Gastrocnemius medialis (tissue), 4 donors: ENCODE measurements at regions of chr16 and their contacts with region 1.

Region 1: GRCh38 chr16:89442990-89443731 is 47.2 kb downstream of the ANKRD11 start:
- DNase-seq: peak in 1 of 2 donors; percentile 69
- ATAC-seq: peak; percentile 7 to 46
- H3K4me3 ChIP-seq: no peak overlapping the region
- H3K27ac ChIP-seq: peak overlapping the region; percentile 81 to 90 (median 81)
- H3K4me1 ChIP-seq: peaks cover 83 to 92% of the 10 kb centered on the region in 2 donors
- H3K27me3 ChIP-seq: no peaks in the 10 kb centered on the region
- CTCF ChIP-seq: no peak
- POLR2A ChIP-seq: no peak

Region 2: GRCh38 chr16:89410794-89411309 is 32.3 kb before region 1 on chr16:
- in situ Hi-C with region 1: no loop called
- intact Hi-C with region 1: no loop called
- DNase-seq: peak; percentile 34 to 53
- ATAC-seq: peak; percentile 28 to 51
- H3K4me3 ChIP-seq: no peak overlapping the region
- H3K27ac ChIP-seq: peak overlapping the region; percentile 9 to 82 (median 49)
- H3K4me1 ChIP-seq: peaks cover 85 to 94% of the 10 kb centered on the region in 2 donors
- H3K27me3 ChIP-seq: no peaks in the 10 kb centered on the region
- CTCF ChIP-seq: no peak
- POLR2A ChIP-seq: no peak

Region 3: GRCh38 chr16:89466920-89467319 is 23.8 kb after region 1 on chr16:
- in situ Hi-C with region 1: no loop called
- intact Hi-C with region 1: loop called (anchors 2 kb)
- DNase-seq: no peak
- ATAC-seq: no peak
- H3K4me3 ChIP-seq: no peak overlapping the region
- H3K27ac ChIP-seq: peak overlapping the region in 1 of 4 donors; percentile 31
- H3K4me1 ChIP-seq: peaks cover 47 to 48% of the 10 kb centered on the region in 2 donors
- H3K27me3 ChIP-seq: no peaks in the 10 kb centered on the region
- CTCF ChIP-seq: no peak
- POLR2A ChIP-seq: no peak

Region 4: GRCh38 chr16:89476804-89477261 is 33.7 kb after region 1 on chr16:
- in situ Hi-C with region 1: no loop called
- intact Hi-C with region 1: loop called (anchors 5 kb)
- DNase-seq: no peak
- ATAC-seq: peak; percentile 73 to 83
- H3K4me3 ChIP-seq: no peak overlapping the region
- H3K27ac ChIP-seq: peak overlapping the region; percentile 62 to 86 (median 74)
- H3K4me1 ChIP-seq: peaks cover 92 to 96% of the 10 kb centered on the region in 2 donors
- H3K27me3 ChIP-seq: no peaks in the 10 kb centered on the region
- CTCF ChIP-seq: no peak
- POLR2A ChIP-seq: peak in 1 of 2 donors; percentile 18

Region 5: GRCh38 chr16:89490387-89491237 is 47.5 kb after region 1 on chr16 and contains the start of gene ANKRD11:
- in situ Hi-C with region 1: no loop called
- intact Hi-C with region 1: no loop called
- DNase-seq: peak; percentile 100
- ATAC-seq: peak; percentile 91 to 93
- H3K4me3 ChIP-seq: peak within 1 kb of the TSS; percentile 76 to 96 (median 86)
- H3K27ac ChIP-seq: peak within 1 kb of the TSS; percentile 96 to 100 (median 98)
- H3K4me1 ChIP-seq: peaks cover 37 to 52% of the 10 kb centered on the region in 2 donors
- H3K27me3 ChIP-seq: no peaks in the 10 kb centered on the region
- CTCF ChIP-seq: no peak
- POLR2A ChIP-seq: peak; percentile 96 to 98
- total RNA-seq, gene ANKRD11: 26.0 to 77.0 (median 55.0) TPM